ENCODE measurements at regions of chr11 and their contacts with region 1.

Region 1: GRCh38 chr11:76293189-76293631 is 86.9 kb upstream of the WNT11 start:
- DNase-seq: no peak
- ATAC-seq: no peak
- H3K4me3 ChIP-seq: no peak overlapping the region
- H3K27ac ChIP-seq: no peak overlapping the region
- H3K4me1 ChIP-seq: no peaks in the 10 kb centered on the region
- H3K27me3 ChIP-seq: no peaks in the 10 kb centered on the region
- CTCF ChIP-seq: no peak

Region 2: DNA sequence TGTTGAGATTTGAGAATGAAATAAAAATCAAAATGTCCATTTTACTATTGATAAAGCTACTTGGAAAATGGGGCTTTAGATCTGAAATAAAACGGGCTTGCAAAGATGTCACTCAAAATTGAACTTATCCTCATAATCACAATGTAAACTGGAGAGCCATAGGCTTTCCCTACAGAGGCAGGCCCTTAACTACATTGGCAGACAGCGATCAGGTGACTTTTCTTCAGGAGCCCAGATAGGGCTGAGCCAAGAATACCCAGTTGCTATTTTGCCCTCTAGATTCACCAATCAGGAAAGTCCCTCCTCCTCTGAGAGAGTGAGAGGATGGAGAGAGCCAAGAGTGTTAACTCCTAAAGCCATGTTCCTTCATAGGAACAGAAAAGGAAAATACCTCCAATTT is 175.7 kb before region 1 on chr11:
- CTCF ChIA-PET with region 1: no interaction called
- POLR2A ChIA-PET with region 1: interaction called, 20 read pairs
- in situ Hi-C with region 1: no loop called
- intact Hi-C with region 1: no loop called
- DNase-seq: no peak
- ATAC-seq: no peak
- H3K4me3 ChIP-seq: no peak overlapping the region
- H3K27ac ChIP-seq: no peak overlapping the region
- H3K4me1 ChIP-seq: no peaks in the 10 kb centered on the region
- H3K27me3 ChIP-seq: no peaks in the 10 kb centered on the region
- CTCF ChIP-seq: no peak

Region 3: DNA sequence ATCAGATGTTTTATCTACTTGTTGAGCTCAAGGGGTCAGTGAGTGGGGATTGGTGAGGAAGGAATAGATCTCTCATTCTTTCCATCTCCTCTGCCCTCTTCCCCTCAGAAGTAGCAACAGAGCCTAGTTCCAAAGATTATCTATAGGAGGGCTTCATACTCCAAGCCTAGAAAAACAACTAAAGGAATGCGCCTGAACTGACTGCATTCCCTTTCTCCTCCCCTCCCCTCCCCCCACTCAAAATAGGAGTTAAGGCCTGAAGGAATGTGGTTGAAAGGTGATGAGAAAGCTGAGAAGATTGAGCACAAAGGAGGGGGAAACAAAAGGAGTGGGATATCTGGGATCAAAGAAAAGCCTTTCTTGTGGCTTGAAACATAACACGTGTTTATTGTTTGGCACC is 162.1 kb after region 1 on chr11:
- CTCF ChIA-PET with region 1: no interaction called
- POLR2A ChIA-PET with region 1: no interaction called
- in situ Hi-C with region 1: no loop called
- intact Hi-C with region 1: no loop called
- DNase-seq: no peak
- ATAC-seq: no peak
- H3K4me3 ChIP-seq: no peak overlapping the region
- H3K27ac ChIP-seq: no peak overlapping the region
- H3K4me1 ChIP-seq: peaks cover 3% of the 10 kb centered on the region; the same call in 1 of the 2 replicates
- H3K27me3 ChIP-seq: no peaks in the 10 kb centered on the region
- CTCF ChIP-seq: no peak